ENCODE measurements at regions of chr17 and their contacts with region 1.

Region 1: DNA sequence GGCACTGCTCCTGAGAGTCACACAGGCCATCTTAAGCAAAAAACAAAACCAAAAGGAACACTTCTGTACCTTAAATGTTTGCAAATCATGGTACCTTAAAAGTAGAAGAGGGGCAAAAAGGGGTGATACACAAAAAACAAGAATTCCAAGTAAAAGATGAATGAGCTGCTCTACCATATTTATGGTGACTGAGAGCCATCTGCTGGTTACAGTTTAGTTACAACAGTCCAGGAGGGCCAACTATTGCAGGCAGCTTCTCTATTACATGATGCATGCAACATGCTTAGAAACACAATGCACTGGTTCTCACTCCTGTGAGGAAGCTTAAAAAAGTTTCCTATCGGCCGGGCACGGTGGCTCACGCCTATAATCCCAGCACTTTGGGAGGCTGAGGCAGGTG is 53.5 kb downstream of the STX8 start:
- DNase-seq: no peak
- ATAC-seq: peak; percentile 48
- H3K4me3 ChIP-seq: no peak overlapping the region
- H3K27ac ChIP-seq: no peak overlapping the region
- H3K4me1 ChIP-seq: no peaks in the 10 kb centered on the region
- H3K27me3 ChIP-seq: no peaks in the 10 kb centered on the region
- CTCF ChIP-seq: peak; percentile 46

Region 2: GRCh38 chr17:8991514-8992285 is 530.4 kb before region 1 on chr17:
- intact Hi-C with region 1: loop called (anchors 10 kb)
- DNase-seq: no peak
- ATAC-seq: peak; percentile 83
- H3K4me3 ChIP-seq: no peak overlapping the region
- H3K27ac ChIP-seq: no peak overlapping the region
- H3K4me1 ChIP-seq: no peaks in the 10 kb centered on the region
- H3K27me3 ChIP-seq: peaks cover 5% of the 10 kb centered on the region
- CTCF ChIP-seq: peak; percentile 82

Region 3: GRCh38 chr17:9465210-9465921 is 56.7 kb before region 1 on chr17:
- intact Hi-C with region 1: no loop called
- DNase-seq: no peak
- ATAC-seq: no peak
- H3K4me3 ChIP-seq: no peak overlapping the region
- H3K27ac ChIP-seq: no peak overlapping the region
- H3K4me1 ChIP-seq: peaks cover 4% of the 10 kb centered on the region
- H3K27me3 ChIP-seq: no peaks in the 10 kb centered on the region
- CTCF ChIP-seq: no peak